Natural killer cell (primary cell): ENCODE measurements at regions of chr3 and their contacts with region 1.

Region 1: GRCh38 chr3:4834403-4834866 is 144.8 kb upstream of the BHLHE40 start:
- DNase-seq: peak; percentile 63 to 85
- ATAC-seq: peak; percentile 65 to 75 (median 66)
- H3K4me3 ChIP-seq: no peak overlapping the region
- H3K4me3 Mint-ChIP-seq: peak overlapping the region; percentile 63
- H3K27ac ChIP-seq: peak overlapping the region; percentile 69
- H3K27ac Mint-ChIP-seq: peak overlapping the region; percentile 88 to 89
- H3K4me1 ChIP-seq: peaks cover 61% of the 10 kb centered on the region
- H3K4me1 Mint-ChIP-seq: peaks cover 57 to 59% of the 10 kb centered on the region in 2 donors
- H3K27me3 ChIP-seq: no peaks in the 10 kb centered on the region
- H3K27me3 Mint-ChIP-seq: no peaks in the 10 kb centered on the region
- CTCF ChIP-seq: no peak

Region 2: GRCh38 chr3:4722103-4722502 is 112.3 kb before region 1 on chr3:
- intact Hi-C with region 1: loop called (anchors 5 kb)
- DNase-seq: peak in 1 of 2 donors; percentile 55
- ATAC-seq: peak; percentile 76 to 95 (median 91)
- H3K4me3 ChIP-seq: no peak overlapping the region
- H3K4me3 Mint-ChIP-seq: no peak overlapping the region
- H3K27ac ChIP-seq: no peak overlapping the region
- H3K27ac Mint-ChIP-seq: peak overlapping the region; percentile 20 to 34
- H3K4me1 ChIP-seq: peaks cover 6% of the 10 kb centered on the region
- H3K4me1 Mint-ChIP-seq: peaks cover 19 to 28% of the 10 kb centered on the region in 2 donors
- H3K27me3 ChIP-seq: no peaks in the 10 kb centered on the region
- H3K27me3 Mint-ChIP-seq: no peaks in the 10 kb centered on the region
- CTCF ChIP-seq: peak; percentile 53

Region 3: GRCh38 chr3:4821975-4822374 is 12.5 kb before region 1 on chr3:
- intact Hi-C with region 1: loop called (anchors 1 kb)
- DNase-seq: peak; percentile 71 to 95
- ATAC-seq: peak; percentile 88 to 97 (median 93)
- H3K4me3 ChIP-seq: no peak overlapping the region
- H3K4me3 Mint-ChIP-seq: peak overlapping the region; percentile 76
- H3K27ac ChIP-seq: peak overlapping the region; percentile 58
- H3K27ac Mint-ChIP-seq: peak overlapping the region; percentile 59 to 97
- H3K4me1 ChIP-seq: peaks cover 47% of the 10 kb centered on the region
- H3K4me1 Mint-ChIP-seq: peaks cover 51 to 69% of the 10 kb centered on the region in 2 donors
- H3K27me3 ChIP-seq: no peaks in the 10 kb centered on the region
- H3K27me3 Mint-ChIP-seq: no peaks in the 10 kb centered on the region
- CTCF ChIP-seq: no peak

Region 4: DNA sequence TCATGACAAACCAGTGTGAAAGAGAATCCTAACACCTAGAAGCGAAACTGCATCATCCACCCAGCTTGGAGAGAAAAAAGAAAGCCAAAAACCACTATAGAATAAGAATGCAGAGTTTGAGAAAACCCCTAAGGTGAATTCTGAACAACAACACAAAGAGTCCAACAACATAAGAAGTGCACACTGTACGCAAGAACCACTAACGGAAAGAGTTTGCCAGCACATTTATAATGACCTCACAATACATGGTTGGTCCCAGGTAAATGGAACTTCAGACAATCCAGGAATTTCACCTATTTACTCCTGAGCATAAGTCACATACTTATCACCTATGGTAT is 16.5 kb after region 1 on chr3:
- intact Hi-C with region 1: loop called (anchors 1 kb)
- DNase-seq: peak in 1 of 2 donors; percentile 84
- ATAC-seq: peak; percentile 82 to 86 (median 83)
- H3K4me3 ChIP-seq: no peak overlapping the region
- H3K4me3 Mint-ChIP-seq: peak overlapping the region; percentile 42
- H3K27ac ChIP-seq: peak overlapping the region; percentile 98
- H3K27ac Mint-ChIP-seq: peak overlapping the region; percentile 79 to 96
- H3K4me1 ChIP-seq: peaks cover 39% of the 10 kb centered on the region
- H3K4me1 Mint-ChIP-seq: peaks cover 72 to 75% of the 10 kb centered on the region in 2 donors
- H3K27me3 ChIP-seq: no peaks in the 10 kb centered on the region
- H3K27me3 Mint-ChIP-seq: no peaks in the 10 kb centered on the region
- CTCF ChIP-seq: no peak

Region 5: GRCh38 chr3:4888913-4889846 is 54.7 kb after region 1 on chr3:
- intact Hi-C with region 1: loop called (anchors 1 kb)
- DNase-seq: peak; percentile 44 to 77
- ATAC-seq: peak; percentile 88 to 98 (median 94)
- H3K4me3 ChIP-seq: no peak overlapping the region
- H3K4me3 Mint-ChIP-seq: peak overlapping the region; percentile 36
- H3K27ac ChIP-seq: peak overlapping the region; percentile 60
- H3K27ac Mint-ChIP-seq: peak overlapping the region; percentile 85 to 87
- H3K4me1 ChIP-seq: peaks cover 18% of the 10 kb centered on the region
- H3K4me1 Mint-ChIP-seq: peaks cover 16 to 17% of the 10 kb centered on the region in 2 donors
- H3K27me3 ChIP-seq: no peaks in the 10 kb centered on the region
- H3K27me3 Mint-ChIP-seq: no peaks in the 10 kb centered on the region
- CTCF ChIP-seq: no peak

Region 6: GRCh38 chr3:4906107-4906621 is 71.7 kb after region 1 on chr3:
- intact Hi-C with region 1: loop called (anchors 5 kb)
- DNase-seq: no peak
- ATAC-seq: peak in 1 of 3 donors; percentile 27
- H3K4me3 ChIP-seq: no peak overlapping the region
- H3K4me3 Mint-ChIP-seq: peak overlapping the region; percentile 85
- H3K27ac ChIP-seq: no peak overlapping the region
- H3K27ac Mint-ChIP-seq: peak overlapping the region; percentile 90 to 95
- H3K4me1 ChIP-seq: peaks cover 35% of the 10 kb centered on the region
- H3K4me1 Mint-ChIP-seq: peaks cover 52 to 65% of the 10 kb centered on the region in 2 donors
- H3K27me3 ChIP-seq: no peaks in the 10 kb centered on the region
- H3K27me3 Mint-ChIP-seq: no peaks in the 10 kb centered on the region
- CTCF ChIP-seq: no peak

Region 7: DNA sequence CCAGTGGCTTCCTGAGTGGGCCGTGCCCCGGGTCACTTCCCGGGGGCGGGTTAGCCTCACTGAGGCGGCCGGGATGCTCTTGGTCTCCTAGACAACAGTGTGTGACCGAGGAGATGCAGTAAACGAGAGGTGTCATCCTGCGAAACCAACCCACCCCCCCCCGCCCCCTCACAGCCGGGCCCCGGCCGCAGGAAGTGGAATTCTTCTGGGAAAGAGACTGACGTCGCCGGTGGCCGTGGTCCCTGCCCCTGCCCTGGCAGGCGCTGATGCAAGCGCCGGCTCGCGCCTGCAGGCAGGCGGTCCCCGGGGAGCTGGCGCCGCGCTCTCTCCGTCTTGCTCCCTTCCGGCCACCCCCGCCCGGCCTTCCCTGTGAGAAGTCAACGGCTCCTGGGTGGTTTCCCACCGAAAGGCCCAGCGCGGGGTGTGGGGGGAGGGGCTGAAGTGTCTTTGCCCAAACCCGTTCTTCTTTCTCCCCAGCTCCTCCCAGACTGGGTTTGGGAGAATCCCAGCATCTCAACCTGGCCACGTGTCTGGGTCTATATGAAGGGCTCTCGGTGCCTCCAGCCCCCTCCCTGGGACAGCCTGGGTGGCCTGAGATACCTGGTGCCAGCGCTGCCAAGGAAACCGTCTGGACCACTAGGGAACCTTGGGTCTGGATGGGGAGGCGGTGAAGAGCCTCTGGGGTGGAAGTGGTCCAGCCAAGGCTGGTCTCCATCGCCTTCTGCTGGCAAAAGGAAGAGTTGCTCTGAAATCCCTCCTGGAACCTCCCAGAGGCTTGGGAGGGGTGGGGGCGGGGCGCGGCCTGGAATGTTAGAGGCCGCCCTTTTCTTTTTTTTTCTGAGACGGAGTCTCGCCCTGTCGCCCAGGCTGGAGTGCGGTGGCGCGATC is 192.1 kb after region 1 on chr3:
- intact Hi-C with region 1: loop called (anchors 5 kb)
- DNase-seq: peak; percentile 73 to 82
- ATAC-seq: peak; percentile 79 to 91 (median 86)
- H3K4me3 ChIP-seq: peak overlapping the region; percentile 75
- H3K4me3 Mint-ChIP-seq: peak overlapping the region; percentile 89
- H3K27ac ChIP-seq: peak overlapping the region; percentile 84
- H3K27ac Mint-ChIP-seq: peak overlapping the region; percentile 86 to 92
- H3K4me1 ChIP-seq: peaks cover 17% of the 10 kb centered on the region
- H3K4me1 Mint-ChIP-seq: peaks cover 9 to 15% of the 10 kb centered on the region in 2 donors
- H3K27me3 ChIP-seq: no peaks in the 10 kb centered on the region
- H3K27me3 Mint-ChIP-seq: peaks cover 0 to 2% of the 10 kb centered on the region in 2 donors
- CTCF ChIP-seq: peak; percentile 61

Region 8: GRCh38 chr3:5095879-5096278 is 261.4 kb after region 1 on chr3:
- intact Hi-C with region 1: no loop called
- DNase-seq: peak in 1 of 2 donors; percentile 10
- ATAC-seq: peak in 1 of 3 donors; percentile 53
- H3K4me3 ChIP-seq: no peak overlapping the region
- H3K4me3 Mint-ChIP-seq: no peak overlapping the region
- H3K27ac ChIP-seq: no peak overlapping the region
- H3K27ac Mint-ChIP-seq: no peak overlapping the region
- H3K4me1 ChIP-seq: peaks cover 3% of the 10 kb centered on the region
- H3K4me1 Mint-ChIP-seq: no peaks in the 10 kb centered on the region
- H3K27me3 ChIP-seq: peaks cover 3% of the 10 kb centered on the region
- H3K27me3 Mint-ChIP-seq: peaks cover 14 to 20% of the 10 kb centered on the region in 2 donors
- CTCF ChIP-seq: no peak